CD4-positive, alpha-beta T cell (primary cell): ENCODE measurements at regions of chr6 and their contacts with region 1.

Region 1: DNA sequence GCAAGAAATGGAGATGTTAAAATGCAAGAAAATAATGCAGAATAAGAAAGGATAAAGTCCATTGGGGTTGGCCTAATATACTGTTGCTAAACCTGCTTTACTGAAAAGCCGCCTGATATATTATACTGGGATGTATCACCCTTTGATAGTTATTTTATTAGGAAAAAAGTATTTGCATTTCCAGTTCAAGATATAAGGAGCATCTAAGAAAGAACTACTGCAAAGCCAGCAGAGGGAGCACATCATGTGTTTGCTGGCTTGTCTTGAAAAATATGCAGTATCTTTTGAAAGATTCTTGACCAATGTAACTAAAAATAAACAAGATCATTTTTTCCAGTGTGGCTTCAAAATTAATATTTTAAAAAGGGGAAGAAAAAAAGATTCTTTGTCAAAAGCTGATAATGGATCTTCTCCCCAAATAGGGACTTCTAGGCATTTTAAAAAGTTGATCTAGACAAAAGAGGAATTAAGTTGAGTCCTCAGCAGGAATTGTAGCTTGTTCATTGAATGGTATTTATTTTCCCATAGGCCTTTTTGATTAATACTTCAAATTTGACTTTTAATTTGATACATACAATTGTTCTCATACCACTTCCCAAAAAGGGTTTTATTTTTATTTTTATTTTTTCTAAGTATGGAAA is 214.9 kb downstream of the ZFAND3 start:
- DNase-seq: peak in 3 of 14 experiments; percentile 5 to 26 (median 22)
- ATAC-seq: no peak
- H3K4me3 ChIP-seq: no peak overlapping the region
- H3K4me3 Mint-ChIP-seq: no peak overlapping the region
- H3K27ac ChIP-seq: no peak overlapping the region
- H3K27ac Mint-ChIP-seq: no peak overlapping the region
- H3K4me1 ChIP-seq: no peaks in the 10 kb centered on the region
- H3K4me1 Mint-ChIP-seq: peaks cover 85% of the 10 kb centered on the region
- H3K27me3 ChIP-seq: no peaks in the 10 kb centered on the region
- H3K27me3 Mint-ChIP-seq: no peaks in the 10 kb centered on the region
- CTCF ChIP-seq: peak; percentile 31

Region 2: DNA sequence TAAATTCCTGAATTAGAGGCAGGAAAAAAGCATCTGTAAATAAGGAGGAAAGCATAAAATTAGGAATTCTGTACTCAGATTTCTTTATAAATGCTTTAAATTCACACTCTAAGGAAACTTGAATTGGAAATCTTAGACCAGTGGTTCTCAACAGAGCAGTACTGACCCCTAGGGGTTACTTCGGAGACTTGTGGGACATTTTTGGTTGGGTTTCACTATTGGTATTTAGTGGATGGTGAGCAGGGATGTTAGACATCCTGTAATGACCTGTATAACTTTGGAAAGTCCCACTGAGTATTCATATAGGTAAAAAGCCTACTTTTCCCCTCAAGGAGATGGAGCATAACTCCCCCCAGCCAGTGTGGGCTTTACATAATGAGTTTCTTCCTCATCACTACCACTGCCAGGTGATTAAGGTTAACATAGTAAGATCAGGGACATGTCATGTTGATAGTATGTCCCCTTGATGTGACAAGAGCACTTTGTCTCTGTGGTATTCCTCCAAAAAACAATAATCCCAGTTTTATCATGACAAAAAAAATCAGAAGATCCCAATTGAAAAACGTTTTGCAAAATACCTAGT is 637.6 kb after region 1 on chr6:
- CTCF ChIA-PET with region 1: no interaction called
- POLR2A ChIA-PET with region 1: no interaction called
- intact Hi-C with region 1: loop called in 1 of 2 experiments (anchors 5 kb)
- DNase-seq: peak in 5 of 14 experiments; percentile 18 to 73 (median 61)
- ATAC-seq: peak; percentile 59
- H3K4me3 ChIP-seq: no peak overlapping the region
- H3K4me3 Mint-ChIP-seq: no peak overlapping the region
- H3K27ac ChIP-seq: no peak overlapping the region
- H3K27ac Mint-ChIP-seq: no peak overlapping the region
- H3K4me1 ChIP-seq: peaks cover 7% of the 10 kb centered on the region
- H3K4me1 Mint-ChIP-seq: peaks cover 25% of the 10 kb centered on the region
- H3K27me3 ChIP-seq: no peaks in the 10 kb centered on the region
- H3K27me3 Mint-ChIP-seq: no peaks in the 10 kb centered on the region
- CTCF ChIP-seq: peak; percentile 77